ENCODE measurements at regions of chr3 and their contacts with region 1.

Region 1: DNA sequence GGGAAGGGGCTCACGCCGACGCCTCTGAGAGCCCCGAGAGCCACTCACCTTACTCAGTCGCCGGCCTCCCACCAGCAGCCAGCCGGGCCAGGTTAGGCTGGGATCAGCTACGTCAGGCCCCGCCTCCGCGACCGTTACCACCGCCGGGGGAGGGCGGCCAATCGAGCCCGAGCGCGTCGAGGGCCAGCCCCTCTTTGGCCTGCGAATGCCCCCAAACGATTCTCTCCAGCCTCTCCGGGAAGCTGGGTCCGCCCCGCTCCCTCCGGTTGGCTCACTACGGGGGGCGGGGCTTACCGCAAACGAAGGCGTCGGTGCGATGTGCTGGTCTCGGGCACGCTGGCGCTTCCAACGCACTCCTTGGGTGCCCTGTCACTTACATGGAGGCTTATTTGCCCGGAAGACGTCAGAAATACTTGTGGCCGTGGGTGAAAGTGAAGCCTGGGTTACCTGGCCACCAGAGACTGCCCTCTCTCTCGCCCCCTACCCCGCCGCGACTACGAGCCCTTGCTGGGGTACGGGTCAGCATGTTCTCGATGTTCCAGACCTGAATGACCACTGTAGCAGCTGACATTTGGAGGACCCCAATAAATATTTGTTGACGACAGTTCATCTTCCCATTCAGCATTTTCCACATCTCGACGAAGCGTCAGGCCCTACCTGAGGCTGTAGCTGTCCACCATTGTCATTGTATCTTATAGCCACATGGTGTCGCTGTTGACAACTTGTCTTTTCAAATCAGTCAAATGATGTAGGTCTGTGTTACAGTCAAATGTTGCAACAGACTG is at the start of gene CEP70:
- DNase-seq: peak; percentile 79 to 92 (median 89)
- ATAC-seq: peak; percentile 95
- H3K4me3 ChIP-seq: peak within 1 kb of the TSS; percentile 96
- H3K4me3 Mint-ChIP-seq: peak within 1 kb of the TSS; percentile 87 to 96 (median 90)
- H3K27ac ChIP-seq: peak within 1 kb of the TSS; percentile 79
- H3K27ac Mint-ChIP-seq: peak within 1 kb of the TSS; percentile 82 to 99 (median 94)
- H3K4me1 ChIP-seq: peaks cover 0 to 4% of the 10 kb centered on the region in 2 donors
- H3K4me1 Mint-ChIP-seq: peaks cover 0 to 17% (median 12%) of the 10 kb centered on the region in 7 donors
- H3K27me3 ChIP-seq: no peaks in the 10 kb centered on the region
- H3K27me3 Mint-ChIP-seq: no peaks in the 10 kb centered on the region
- total RNA-seq, gene CEP70: 11.8 to 35.1 (median 21.1) TPM

Region 2: GRCh38 chr3:138068579-138069174 is 525.7 kb before region 1 on chr3:
- CTCF ChIA-PET with region 1: no interaction called
- POLR2A ChIA-PET with region 1: no interaction called
- intact Hi-C with region 1: loop called in 1 of 2 experiments (anchors 5 kb)
- DNase-seq: peak; percentile 36 to 78 (median 55)
- ATAC-seq: peak; percentile 85
- H3K4me3 ChIP-seq: no peak overlapping the region
- H3K4me3 Mint-ChIP-seq: no peak overlapping the region
- H3K27ac ChIP-seq: no peak overlapping the region
- H3K27ac Mint-ChIP-seq: no peak overlapping the region
- H3K4me1 ChIP-seq: no peaks in the 10 kb centered on the region
- H3K4me1 Mint-ChIP-seq: peaks cover 0 to 8% (median 0%) of the 10 kb centered on the region in 7 donors
- H3K27me3 ChIP-seq: no peaks in the 10 kb centered on the region
- H3K27me3 Mint-ChIP-seq: peaks cover 6 to 15% (median 12%) of the 10 kb centered on the region in 5 donors

Region 3: GRCh38 chr3:138329127-138329983 is 265.0 kb before region 1 on chr3 and contains the start of gene NME9:
- CTCF ChIA-PET with region 1: interaction called, 3 read pairs
- POLR2A ChIA-PET with region 1: no interaction called
- intact Hi-C with region 1: loop called (anchors 1 to 5 kb)
- DNase-seq: peak; percentile 79 to 91 (median 86)
- ATAC-seq: peak; percentile 95
- H3K4me3 ChIP-seq: peak within 1 kb of the TSS; percentile 78
- H3K4me3 Mint-ChIP-seq: peak within 1 kb of the TSS; percentile 91 to 99 (median 97)
- H3K27ac ChIP-seq: peak within 1 kb of the TSS; percentile 86
- H3K27ac Mint-ChIP-seq: peak within 1 kb of the TSS; percentile 85 to 98 (median 94)
- H3K4me1 ChIP-seq: peaks cover 5 to 8% of the 10 kb centered on the region in 2 donors
- H3K4me1 Mint-ChIP-seq: peaks cover 12 to 40% (median 36%) of the 10 kb centered on the region in 7 donors
- H3K27me3 ChIP-seq: no peaks in the 10 kb centered on the region
- H3K27me3 Mint-ChIP-seq: peaks cover 0 to 10% (median 0%) of the 10 kb centered on the region in 5 donors
- total RNA-seq, gene NME9: 0.69 to 2.0 (median 1.2) TPM in 4 of 5 experiments, not detected in the other

Region 4: DNA sequence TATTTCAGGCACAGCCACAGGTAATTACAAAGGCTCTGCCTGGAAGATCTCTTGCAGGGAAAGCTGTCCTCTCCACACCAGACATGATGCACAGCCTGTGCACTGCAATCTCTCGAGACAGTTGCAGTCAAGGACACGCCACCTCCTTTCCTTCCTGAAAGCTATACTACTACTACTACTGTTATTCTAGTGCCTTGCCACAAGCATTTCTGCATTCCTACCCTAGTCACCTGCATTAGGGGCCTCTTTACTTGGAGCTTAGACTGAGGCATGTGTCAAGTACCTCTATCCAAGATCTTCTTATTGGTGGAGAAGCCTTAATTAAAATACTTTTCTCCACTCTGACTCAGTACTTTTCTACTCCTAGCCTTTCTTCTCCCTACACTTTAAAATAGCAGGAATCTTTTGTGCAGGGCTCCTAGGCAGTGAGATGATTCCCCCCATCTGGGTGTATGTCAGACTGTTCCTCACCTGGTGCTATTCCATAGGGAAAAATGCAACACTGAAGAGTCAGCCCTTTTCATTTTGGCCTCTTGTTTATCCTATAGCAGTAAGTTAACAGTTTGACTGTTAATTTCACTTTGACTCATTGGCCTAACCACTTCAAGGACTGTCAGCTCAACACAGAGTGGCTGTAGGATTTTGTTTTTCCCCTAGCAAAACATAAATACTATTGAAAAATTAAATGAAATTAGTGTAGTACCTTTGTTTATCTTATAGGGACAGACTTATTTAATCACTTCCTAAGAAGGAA is 81.1 kb before region 1 on chr3:
- CTCF ChIA-PET with region 1: no interaction called
- POLR2A ChIA-PET with region 1: no interaction called
- intact Hi-C with region 1: loop called in 1 of 2 experiments (anchors 2 kb)
- DNase-seq: peak in 1 of 9 donors; percentile 25
- ATAC-seq: no peak
- H3K4me3 ChIP-seq: no peak overlapping the region
- H3K4me3 Mint-ChIP-seq: peak overlapping the region in 1 of 10 donors; percentile 68
- H3K27ac ChIP-seq: no peak overlapping the region
- H3K27ac Mint-ChIP-seq: peak overlapping the region in 1 of 9 donors; percentile 84
- H3K4me1 ChIP-seq: no peaks in the 10 kb centered on the region
- H3K4me1 Mint-ChIP-seq: peaks cover 0 to 26% (median 0%) of the 10 kb centered on the region in 7 donors
- H3K27me3 ChIP-seq: no peaks in the 10 kb centered on the region
- H3K27me3 Mint-ChIP-seq: no peaks in the 10 kb centered on the region

Region 5: DNA sequence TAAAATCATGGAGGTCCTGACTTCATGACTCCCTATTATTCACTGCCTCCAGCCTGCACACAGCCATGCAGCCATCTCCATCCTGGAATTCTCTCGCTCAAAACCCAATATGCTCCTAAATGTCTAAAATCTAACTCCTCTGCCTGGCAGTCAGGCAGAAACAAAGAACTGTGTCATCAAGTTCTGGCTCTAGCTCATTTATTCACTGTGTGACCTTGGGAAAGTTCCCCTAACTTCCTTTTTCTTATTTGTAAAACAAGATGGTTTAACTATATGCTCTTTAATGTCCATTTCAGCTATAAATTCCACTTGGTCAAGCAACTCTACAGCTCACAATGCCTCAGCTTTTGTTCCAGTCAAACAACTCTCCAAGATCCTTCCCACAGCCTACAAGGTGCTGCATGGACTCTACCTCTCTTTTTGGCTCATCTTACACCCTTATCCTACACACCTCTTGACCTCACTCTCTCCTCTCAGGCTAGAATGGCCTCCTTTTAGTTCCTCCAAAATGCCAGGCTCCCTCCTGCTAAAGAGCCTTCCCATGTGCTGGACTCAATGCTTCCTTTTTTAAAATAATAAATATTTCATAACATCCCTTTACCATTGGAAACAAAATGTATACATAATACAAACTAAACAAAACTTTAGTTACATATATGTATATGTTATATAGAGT is 224.0 kb after region 1 on chr3:
- CTCF ChIA-PET with region 1: no interaction called
- POLR2A ChIA-PET with region 1: interaction called, 3 read pairs
- intact Hi-C with region 1: loop called in 1 of 2 experiments (anchors 1 kb)
- DNase-seq: no peak
- ATAC-seq: peak; percentile 26
- H3K4me3 ChIP-seq: no peak overlapping the region
- H3K4me3 Mint-ChIP-seq: peak overlapping the region in 4 of 10 donors; percentile 5 to 39 (median 28)
- H3K27ac ChIP-seq: no peak overlapping the region
- H3K27ac Mint-ChIP-seq: peak overlapping the region in 6 of 9 donors; percentile 35 to 84 (median 64)
- H3K4me1 ChIP-seq: peaks cover 12 to 15% of the 10 kb centered on the region in 2 donors
- H3K4me1 Mint-ChIP-seq: peaks cover 22 to 61% (median 50%) of the 10 kb centered on the region in 7 donors
- H3K27me3 ChIP-seq: no peaks in the 10 kb centered on the region
- H3K27me3 Mint-ChIP-seq: no peaks in the 10 kb centered on the region

Region 6: GRCh38 chr3:139329345-139329850 is 735.1 kb after region 1 on chr3:
- CTCF ChIA-PET with region 1: no interaction called
- POLR2A ChIA-PET with region 1: no interaction called
- intact Hi-C with region 1: loop called in 1 of 2 experiments (anchors 1 kb)
- DNase-seq: peak; percentile 68 to 95 (median 82)
- ATAC-seq: peak; percentile 98
- H3K4me3 ChIP-seq: no peak overlapping the region
- H3K4me3 Mint-ChIP-seq: peak overlapping the region; percentile 45 to 85 (median 70)
- H3K27ac ChIP-seq: no peak overlapping the region
- H3K27ac Mint-ChIP-seq: peak overlapping the region in 3 of 9 donors; percentile 10 to 40 (median 22)
- H3K4me1 ChIP-seq: peaks cover 0 to 5% of the 10 kb centered on the region in 2 donors
- H3K4me1 Mint-ChIP-seq: peaks cover 8 to 26% (median 19%) of the 10 kb centered on the region in 7 donors
- H3K27me3 ChIP-seq: no peaks in the 10 kb centered on the region
- H3K27me3 Mint-ChIP-seq: peaks cover 24 to 37% (median 29%) of the 10 kb centered on the region in 5 donors